ENCODE measurements at regions of chr11 and their contacts with region 1.

Region 1: GRCh38 chr11:43311791-43312607 is at the start of gene API5:
- DNase-seq: peak; percentile 65
- H3K4me3 ChIP-seq: peak within 1 kb of the TSS; percentile 91
- CTCF ChIP-seq: peak; percentile 89

Region 2: GRCh38 chr11:43212279-43212678 is 99.7 kb before region 1 on chr11:
- CTCF ChIA-PET with region 1: no interaction called
- POLR2A ChIA-PET with region 1: no interaction called
- DNase-seq: no peak
- H3K4me3 ChIP-seq: no peak overlapping the region
- CTCF ChIP-seq: no peak

Region 3: DNA sequence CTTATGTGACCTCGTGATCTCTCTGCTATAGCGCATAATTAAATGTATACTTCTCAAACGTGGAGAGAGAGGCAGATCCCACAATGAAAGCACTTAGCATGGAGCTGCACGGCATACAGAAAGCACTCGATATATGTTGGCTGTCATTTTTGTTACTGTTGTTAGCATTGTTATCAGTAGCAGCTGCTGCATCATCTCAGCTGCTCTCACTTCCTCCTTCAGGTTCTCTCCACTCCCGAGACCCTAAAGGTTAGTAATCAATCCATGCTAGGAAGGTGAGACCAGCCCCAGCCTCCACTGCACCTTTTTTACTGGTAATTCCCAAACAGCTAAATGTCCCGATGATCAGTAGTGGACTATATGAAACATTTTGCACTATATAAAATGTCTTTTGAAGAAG is 13.6 kb before region 1 on chr11:
- CTCF ChIA-PET with region 1: interaction called, 17 read pairs
- POLR2A ChIA-PET with region 1: interaction called, 5 read pairs
- DNase-seq: no peak
- H3K4me3 ChIP-seq: no peak overlapping the region
- CTCF ChIP-seq: no peak

Region 4: DNA sequence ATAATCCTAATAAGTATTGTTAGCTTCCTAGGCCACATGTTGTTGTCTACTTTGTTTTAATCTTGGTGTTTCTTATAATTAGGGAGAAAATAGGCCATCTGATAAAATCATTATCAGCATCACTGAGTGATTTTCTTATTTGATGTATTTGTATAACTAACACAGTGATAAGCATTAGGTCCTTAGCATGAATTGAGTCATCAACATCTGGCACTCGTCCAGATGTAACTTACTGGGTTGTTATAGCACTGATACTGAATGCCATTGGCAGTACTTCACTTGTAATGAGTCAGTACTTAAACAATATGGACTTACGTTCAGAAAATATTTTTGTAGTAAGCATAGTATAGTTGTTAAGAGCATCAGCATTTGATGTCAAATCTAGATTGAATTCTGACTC is 16.0 kb after region 1 on chr11:
- CTCF ChIA-PET with region 1: interaction called, 31 read pairs
- POLR2A ChIA-PET with region 1: no interaction called
- DNase-seq: peak; percentile 87
- H3K4me3 ChIP-seq: no peak overlapping the region
- CTCF ChIP-seq: no peak